A549 (cell line): ENCODE measurements at regions of chr3 and their contacts with region 1.

Region 1: DNA sequence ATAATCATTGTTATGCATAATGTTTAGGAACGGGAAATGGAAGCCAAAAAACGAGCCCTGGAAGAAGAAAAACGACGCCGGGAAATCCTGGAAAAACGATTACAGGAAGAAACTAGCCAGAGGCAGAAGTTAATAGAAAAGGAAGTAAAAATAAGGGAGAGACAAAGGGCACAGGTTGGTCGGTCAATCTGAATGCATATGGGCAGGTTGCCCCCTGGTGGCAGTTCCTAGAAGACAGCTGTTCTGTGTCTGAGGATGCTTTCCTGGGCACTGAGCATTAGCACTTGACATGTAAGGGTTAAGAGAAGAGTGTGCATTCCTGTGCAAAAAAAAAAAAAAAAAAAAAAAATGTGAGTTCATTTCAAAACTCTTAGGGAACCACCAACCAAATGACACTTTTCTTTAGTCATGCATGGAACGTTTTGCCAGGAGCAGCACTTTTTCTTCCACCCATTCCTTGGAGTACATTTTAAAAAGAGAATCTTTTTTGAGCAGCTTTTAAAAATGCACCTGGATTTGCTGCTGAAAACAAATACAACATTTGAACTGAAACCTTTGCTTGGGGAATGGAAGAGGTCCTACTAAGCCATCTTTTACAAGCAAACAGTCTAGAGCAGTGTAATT is 11.1 kb upstream of the ABHD10 start:
- DNase-seq: peak; percentile 31 to 84
- ATAC-seq: peak; percentile 92 to 97
- H3K4me3 ChIP-seq: no peak overlapping the region
- H3K27ac ChIP-seq: peak overlapping the region; percentile 50 to 79
- H3K4me1 ChIP-seq: peaks cover 25% of the 10 kb centered on the region
- CTCF ChIP-seq: peak; percentile 92
- EP300 ChIP-seq: no peak
- POLR2A ChIP-seq: no peak
- RAD21 ChIP-seq: peak; percentile 95 to 98

Region 2: DNA sequence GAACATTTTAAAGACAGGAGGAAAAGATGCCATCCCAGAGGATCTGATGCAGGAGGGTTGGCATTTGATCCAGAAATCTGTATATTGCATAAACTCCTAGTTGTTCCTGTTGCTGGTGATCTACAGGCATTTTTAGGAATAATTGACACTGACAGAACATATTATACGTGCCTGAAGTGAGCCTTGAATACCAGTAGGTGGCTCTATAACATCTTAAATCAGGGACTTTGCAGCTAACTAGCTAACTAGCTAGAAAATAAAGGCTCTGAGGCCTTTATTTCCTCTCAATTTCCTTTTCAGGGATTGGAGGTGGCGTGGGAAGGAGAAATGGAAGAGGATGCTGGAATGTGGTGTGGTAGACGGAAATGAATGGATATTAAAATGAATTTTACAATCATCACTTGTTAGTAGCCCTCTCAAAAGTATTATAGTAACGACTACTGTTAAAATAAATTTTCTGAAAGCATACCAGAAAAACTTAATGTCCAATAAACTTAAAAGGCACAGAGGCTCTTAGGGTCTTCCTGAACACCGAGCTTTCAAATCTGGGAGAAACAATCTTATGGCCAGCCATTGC is 298.8 kb before region 1 on chr3:
- CTCF ChIA-PET with region 1: interaction called, 10 read pairs
- POLR2A ChIA-PET with region 1: no interaction called
- DNase-seq: peak; percentile 55 to 72
- ATAC-seq: peak; percentile 76 to 90
- H3K4me3 ChIP-seq: no peak overlapping the region
- H3K27ac ChIP-seq: peak overlapping the region; percentile 43 to 64; a peak in 5 of 6 replicates
- H3K4me1 ChIP-seq: peaks cover 37% of the 10 kb centered on the region
- CTCF ChIP-seq: peak; percentile 86
- EP300 ChIP-seq: no peak
- POLR2A ChIP-seq: no peak
- RAD21 ChIP-seq: peak; percentile 91

Region 3: DNA sequence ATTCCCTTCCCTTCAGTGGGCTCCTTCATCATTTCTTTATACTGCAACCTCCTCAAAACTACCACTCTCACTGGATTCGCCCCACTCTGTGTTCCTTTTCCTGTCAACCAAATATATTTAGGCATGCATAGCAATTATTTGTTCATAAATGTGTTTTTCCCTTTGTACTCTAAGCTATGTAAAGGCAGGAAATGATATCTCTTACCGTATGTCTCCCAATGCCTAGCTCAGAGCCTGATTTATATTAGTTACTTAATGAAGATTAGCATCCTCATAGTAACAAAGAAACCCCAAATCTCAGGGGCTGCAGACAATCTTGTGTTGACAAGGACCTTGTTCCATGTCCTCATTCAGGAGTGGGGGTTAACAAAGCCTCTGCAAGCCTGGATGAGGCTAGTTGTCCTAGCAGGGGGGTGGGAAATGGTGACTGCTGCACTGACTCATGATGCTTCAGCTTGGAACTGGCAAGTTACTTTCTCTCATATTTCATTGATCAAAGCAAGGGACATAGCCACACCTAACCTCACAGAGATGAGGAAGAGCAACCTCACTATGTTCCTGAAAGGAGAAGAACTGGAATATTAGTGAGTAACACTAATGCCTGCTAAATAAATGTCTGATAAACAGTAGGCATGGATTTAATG is 93.5 kb before region 1 on chr3:
- CTCF ChIA-PET with region 1: interaction called, 22 read pairs
- POLR2A ChIA-PET with region 1: no interaction called
- DNase-seq: peak; percentile 46 to 65
- ATAC-seq: peak; percentile 75 to 78; a peak in 5 of 6 replicates
- H3K4me3 ChIP-seq: no peak overlapping the region
- H3K27ac ChIP-seq: peak overlapping the region; percentile 62 to 65
- H3K4me1 ChIP-seq: peaks cover 61% of the 10 kb centered on the region
- CTCF ChIP-seq: no peak
- EP300 ChIP-seq: peak in 1 of 2 experiments; percentile 26; a peak in 1 of 5 replicates
- POLR2A ChIP-seq: no peak
- RAD21 ChIP-seq: no peak

Region 4: DNA sequence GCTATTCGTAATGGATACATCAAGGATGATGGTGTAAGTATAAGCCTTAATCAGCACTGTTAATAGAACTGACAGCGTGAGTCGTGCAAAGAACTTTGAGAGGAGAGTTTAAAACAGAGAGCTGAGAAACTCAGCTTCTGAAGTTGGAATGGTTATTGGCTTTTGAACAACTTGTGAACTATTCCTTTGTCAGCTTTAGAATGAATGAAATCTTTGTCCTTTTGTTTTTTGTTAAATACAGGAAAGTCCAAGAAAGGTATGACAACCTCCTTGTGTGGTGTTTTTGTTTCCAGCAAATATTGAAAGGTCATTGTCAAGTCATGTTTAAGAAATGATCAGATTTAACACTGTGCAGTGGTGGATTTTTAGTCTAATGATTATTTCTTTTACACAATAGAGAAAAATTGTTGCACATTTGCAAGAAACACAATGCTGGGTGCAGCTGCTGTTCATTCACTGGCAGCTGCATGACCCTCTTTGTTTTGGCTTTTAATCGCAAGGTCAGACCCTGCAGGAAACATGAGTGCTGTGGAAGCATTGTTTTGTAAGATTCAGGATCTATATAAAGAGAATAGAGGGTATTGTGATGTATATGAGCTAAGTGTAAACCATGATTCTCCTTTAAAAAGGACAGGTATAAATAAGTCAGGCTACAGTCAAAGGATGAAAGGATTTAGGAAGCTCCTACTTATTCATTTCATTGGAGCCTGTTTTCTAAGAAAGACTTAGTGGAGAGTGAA is 10.6 kb before region 1 on chr3:
- CTCF ChIA-PET with region 1: interaction called, 19 read pairs
- POLR2A ChIA-PET with region 1: no interaction called
- DNase-seq: no peak
- ATAC-seq: no peak
- H3K4me3 ChIP-seq: no peak overlapping the region
- H3K27ac ChIP-seq: no peak overlapping the region
- H3K4me1 ChIP-seq: no peaks in the 10 kb centered on the region
- CTCF ChIP-seq: no peak
- EP300 ChIP-seq: no peak
- POLR2A ChIP-seq: no peak
- RAD21 ChIP-seq: no peak

Region 5: GRCh38 chr3:111989061-111989678 is 21.4 kb after region 1 on chr3:
- CTCF ChIA-PET with region 1: interaction called, 15 read pairs
- POLR2A ChIA-PET with region 1: no interaction called
- DNase-seq: peak; percentile 49 to 71
- ATAC-seq: peak; percentile 94 to 97
- H3K4me3 ChIP-seq: no peak overlapping the region
- H3K27ac ChIP-seq: no peak overlapping the region
- H3K4me1 ChIP-seq: peaks cover 2% of the 10 kb centered on the region; the same call in 1 of the 3 replicates
- CTCF ChIP-seq: peak; percentile 81
- EP300 ChIP-seq: no peak
- POLR2A ChIP-seq: no peak
- RAD21 ChIP-seq: peak; percentile 57 to 59

Region 6: DNA sequence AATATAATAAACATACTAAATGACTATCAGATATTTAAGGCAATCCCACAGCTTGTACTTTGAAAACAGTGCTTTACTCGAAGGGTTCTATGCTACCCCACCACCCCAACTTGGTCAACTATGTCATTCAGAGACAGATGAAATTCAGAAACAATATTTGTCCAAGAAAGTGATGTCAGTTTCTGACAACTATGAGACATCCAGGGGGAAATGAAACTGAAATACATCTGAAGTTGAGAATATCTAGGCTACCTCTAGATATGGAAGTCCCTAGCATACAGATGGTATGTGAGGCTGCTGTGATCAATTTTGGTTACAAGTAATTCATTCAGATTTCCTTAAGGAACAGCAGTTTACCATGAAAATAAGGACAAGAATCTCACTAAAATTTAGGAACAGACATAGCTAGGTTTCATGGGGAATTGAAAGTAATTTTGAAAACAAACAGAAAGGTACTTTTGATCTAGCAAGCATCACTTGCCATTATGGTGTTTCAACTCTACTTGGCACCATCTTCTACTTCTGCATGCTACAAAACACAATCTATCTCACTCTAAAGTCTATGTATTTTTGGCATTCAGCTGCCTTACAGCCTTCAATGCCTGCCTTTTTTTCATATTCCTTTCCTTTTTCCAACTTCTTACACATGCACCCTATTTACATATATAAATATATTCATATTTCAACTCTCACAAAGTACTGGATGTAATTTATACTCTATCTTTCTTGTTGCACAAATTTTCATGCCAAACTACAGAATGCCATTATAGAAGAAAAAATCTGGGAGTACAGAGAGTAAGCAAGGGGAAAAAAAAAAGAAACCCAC is 572.3 kb after region 1 on chr3:
- CTCF ChIA-PET with region 1: no interaction called
- POLR2A ChIA-PET with region 1: no interaction called
- DNase-seq: no peak
- ATAC-seq: no peak
- H3K4me3 ChIP-seq: no peak overlapping the region
- H3K27ac ChIP-seq: no peak overlapping the region
- H3K4me1 ChIP-seq: no peaks in the 10 kb centered on the region
- CTCF ChIP-seq: no peak
- EP300 ChIP-seq: no peak
- POLR2A ChIP-seq: no peak
- RAD21 ChIP-seq: no peak